ENCODE measurements at regions of chr1 and their contacts with region 1.

Region 1: GRCh38 chr1:187051618-187052232 is 223.0 kb downstream of the PLA2G4A start:
- DNase-seq: peak; percentile 66
- H3K4me3 ChIP-seq: no peak overlapping the region
- H3K27ac ChIP-seq: no peak overlapping the region
- H3K4me1 ChIP-seq: no peaks in the 10 kb centered on the region
- H3K27me3 ChIP-seq: no peaks in the 10 kb centered on the region
- CTCF ChIP-seq: peak; percentile 74

Region 2: GRCh38 chr1:187257476-187257875 is 205.8 kb after region 1 on chr1:
- CTCF ChIA-PET with region 1: no interaction called
- POLR2A ChIA-PET with region 1: no interaction called
- intact Hi-C with region 1: loop called (anchors 5 kb)
- DNase-seq: no peak
- H3K4me3 ChIP-seq: no peak overlapping the region
- H3K27ac ChIP-seq: no peak overlapping the region
- H3K4me1 ChIP-seq: no peaks in the 10 kb centered on the region
- H3K27me3 ChIP-seq: no peaks in the 10 kb centered on the region
- CTCF ChIP-seq: no peak

Region 3: GRCh38 chr1:187396226-187396625 is 344.5 kb after region 1 on chr1:
- CTCF ChIA-PET with region 1: no interaction called
- POLR2A ChIA-PET with region 1: no interaction called
- intact Hi-C with region 1: loop called (anchors 5 kb)
- DNase-seq: no peak
- H3K4me3 ChIP-seq: no peak overlapping the region
- H3K27ac ChIP-seq: no peak overlapping the region
- H3K4me1 ChIP-seq: no peaks in the 10 kb centered on the region
- H3K27me3 ChIP-seq: no peaks in the 10 kb centered on the region
- CTCF ChIP-seq: no peak

Region 4: GRCh38 chr1:187999973-188000372 is 948.2 kb after region 1 on chr1:
- CTCF ChIA-PET with region 1: no interaction called
- POLR2A ChIA-PET with region 1: no interaction called
- intact Hi-C with region 1: loop called (anchors 10 kb)
- DNase-seq: peak; percentile 10
- H3K4me3 ChIP-seq: no peak overlapping the region
- H3K27ac ChIP-seq: no peak overlapping the region
- H3K4me1 ChIP-seq: no peaks in the 10 kb centered on the region
- H3K27me3 ChIP-seq: no peaks in the 10 kb centered on the region
- CTCF ChIP-seq: peak; percentile 53

Region 5: GRCh38 chr1:188937965-188938551 is 1886.3 kb after region 1 on chr1:
- CTCF ChIA-PET with region 1: no interaction called
- POLR2A ChIA-PET with region 1: no interaction called
- intact Hi-C with region 1: loop called (anchors 10 kb)
- DNase-seq: peak; percentile 49
- H3K4me3 ChIP-seq: no peak overlapping the region
- H3K27ac ChIP-seq: no peak overlapping the region
- H3K4me1 ChIP-seq: no peaks in the 10 kb centered on the region
- H3K27me3 ChIP-seq: no peaks in the 10 kb centered on the region
- CTCF ChIP-seq: peak; percentile 67